ENCODE measurements at regions of chr6 and their contacts with region 1.

Region 1: DNA sequence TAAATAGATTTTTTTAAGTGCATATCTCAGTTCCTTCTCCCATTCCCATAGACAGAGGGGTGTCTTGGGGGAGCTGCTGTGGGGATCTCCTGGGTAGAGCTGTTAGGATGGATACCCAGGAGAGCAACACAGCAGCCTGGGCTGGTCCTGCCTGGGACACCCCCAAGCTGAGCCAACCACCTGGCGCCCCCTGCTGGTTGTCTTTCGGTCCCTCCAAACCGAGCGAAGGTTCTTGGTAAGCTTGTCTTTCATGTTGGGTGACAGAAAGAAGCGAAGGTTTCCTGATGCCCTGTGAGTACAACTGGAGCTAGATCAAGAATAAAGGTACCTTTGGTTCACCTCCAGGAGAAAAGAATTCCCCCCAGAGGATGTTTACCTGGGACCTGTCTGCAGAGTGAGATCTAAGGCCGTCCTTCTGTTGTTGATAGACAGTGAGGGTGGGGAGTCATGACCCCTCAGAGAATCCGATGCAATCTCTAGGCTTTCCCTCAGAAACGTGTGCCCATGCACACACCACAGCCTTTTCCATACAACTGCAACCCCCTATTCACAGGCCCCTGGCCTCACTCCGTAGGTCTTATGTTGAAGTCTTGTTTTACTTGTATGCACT is 50.8 kb downstream of the SNX9 start:
- DNase-seq: peak; percentile 77
- CTCF ChIP-seq: peak; percentile 83

Region 2: GRCh38 chr6:157143171-157143889 is 730.5 kb before region 1 on chr6:
- CTCF ChIA-PET with region 1: no interaction called
- POLR2A ChIA-PET with region 1: no interaction called
- DNase-seq: no peak
- CTCF ChIP-seq: no peak

Region 3: DNA sequence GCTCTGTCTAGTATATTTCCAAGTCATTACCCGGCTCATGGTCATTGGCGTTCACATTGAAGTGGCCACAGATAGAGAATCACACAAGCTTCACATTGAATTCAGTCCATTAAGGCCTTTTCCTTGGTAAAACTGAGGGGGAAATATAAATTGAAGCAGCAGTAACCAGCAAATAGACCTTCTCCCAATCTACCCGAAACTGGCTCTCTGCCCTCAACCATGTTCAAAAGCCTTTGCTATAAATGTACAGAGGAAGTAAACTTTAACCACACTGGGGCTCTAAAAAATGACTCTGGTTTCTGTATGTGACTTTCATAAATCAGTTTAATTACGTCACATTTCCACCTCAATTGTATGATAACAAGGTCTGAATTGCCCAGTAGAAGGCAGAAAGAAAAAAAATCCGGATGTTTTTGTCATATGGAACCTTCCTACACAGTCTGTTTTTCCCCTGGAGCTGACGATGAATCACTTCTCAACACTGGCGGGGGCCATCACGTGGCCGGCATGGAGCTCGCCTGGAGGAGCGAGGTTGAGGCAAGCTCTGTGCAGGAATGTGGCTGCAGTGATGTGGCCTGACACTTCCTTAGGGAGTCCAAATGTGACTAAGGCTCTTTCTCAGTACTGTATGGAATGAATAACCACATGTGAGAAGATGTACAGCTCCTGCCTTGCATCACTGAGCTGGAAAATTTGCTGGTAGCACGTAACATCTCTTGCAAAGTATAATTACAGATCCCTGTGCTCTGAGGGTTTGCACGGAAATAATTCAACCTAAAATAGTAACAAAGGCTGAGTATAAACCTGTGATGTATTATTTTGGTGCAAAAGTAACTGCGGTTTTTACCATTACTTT is 109.4 kb before region 1 on chr6:
- CTCF ChIA-PET with region 1: interaction called, 115 read pairs
- POLR2A ChIA-PET with region 1: no interaction called
- DNase-seq: peak; percentile 74
- CTCF ChIP-seq: no peak

Region 4: GRCh38 chr6:157806856-157807215 is 67.0 kb before region 1 on chr6:
- CTCF ChIA-PET with region 1: interaction called, 13 read pairs
- POLR2A ChIA-PET with region 1: no interaction called
- DNase-seq: no peak
- CTCF ChIP-seq: no peak

Region 5: GRCh38 chr6:157845493-157846259 is 28.2 kb before region 1 on chr6:
- CTCF ChIA-PET with region 1: interaction called, 12 read pairs
- POLR2A ChIA-PET with region 1: no interaction called
- DNase-seq: no peak
- CTCF ChIP-seq: no peak

Region 6: DNA sequence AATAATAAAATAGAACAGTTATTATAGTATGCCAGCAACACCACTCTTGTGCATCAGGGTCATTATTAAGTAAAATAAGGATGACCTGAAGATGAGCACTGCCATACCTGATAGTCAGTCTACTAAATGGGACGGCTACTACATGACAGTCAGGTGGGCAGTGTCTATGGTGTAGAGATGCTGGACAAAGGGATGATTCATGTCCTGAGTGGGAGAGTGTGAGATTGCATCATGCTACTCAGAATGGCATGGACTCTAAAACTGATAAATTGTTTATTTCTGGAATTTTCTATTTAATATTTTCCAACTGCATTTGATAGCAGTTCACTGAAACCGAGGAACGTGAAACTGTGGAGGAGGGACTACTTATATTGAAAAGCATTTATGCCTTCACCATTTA is 12.0 kb before region 1 on chr6:
- CTCF ChIA-PET with region 1: interaction called, 25 read pairs
- POLR2A ChIA-PET with region 1: no interaction called
- DNase-seq: no peak
- CTCF ChIP-seq: no peak

Region 7: DNA sequence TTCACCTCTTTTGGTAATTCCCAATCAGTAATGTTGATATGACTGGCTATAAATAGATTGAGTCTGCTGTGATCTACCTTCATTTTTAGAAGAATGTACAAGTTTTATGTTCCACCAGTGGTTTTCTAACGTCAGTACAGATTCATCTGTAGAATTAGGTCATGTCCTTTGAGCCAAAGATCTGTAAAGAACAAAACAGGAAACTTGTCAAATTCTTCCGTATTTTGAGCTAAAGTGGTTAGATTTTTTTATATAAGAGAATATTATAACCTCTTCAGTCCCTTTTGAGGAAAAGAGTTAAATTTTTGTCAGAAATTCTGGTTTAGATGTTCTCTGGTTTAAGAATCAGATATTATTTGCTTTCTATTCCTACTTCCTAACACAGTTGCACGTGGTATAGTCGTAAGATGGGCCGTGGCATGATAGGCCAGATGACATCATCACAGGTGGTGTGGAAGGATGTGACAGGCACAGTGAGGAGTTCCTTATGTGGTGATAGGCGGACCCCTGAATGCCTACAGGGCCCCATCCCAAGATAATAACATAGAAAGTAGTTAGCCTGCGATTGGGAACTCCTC is 11.5 kb after region 1 on chr6:
- CTCF ChIA-PET with region 1: interaction called, 37 read pairs
- POLR2A ChIA-PET with region 1: no interaction called
- DNase-seq: no peak
- CTCF ChIP-seq: no peak

Region 8: DNA sequence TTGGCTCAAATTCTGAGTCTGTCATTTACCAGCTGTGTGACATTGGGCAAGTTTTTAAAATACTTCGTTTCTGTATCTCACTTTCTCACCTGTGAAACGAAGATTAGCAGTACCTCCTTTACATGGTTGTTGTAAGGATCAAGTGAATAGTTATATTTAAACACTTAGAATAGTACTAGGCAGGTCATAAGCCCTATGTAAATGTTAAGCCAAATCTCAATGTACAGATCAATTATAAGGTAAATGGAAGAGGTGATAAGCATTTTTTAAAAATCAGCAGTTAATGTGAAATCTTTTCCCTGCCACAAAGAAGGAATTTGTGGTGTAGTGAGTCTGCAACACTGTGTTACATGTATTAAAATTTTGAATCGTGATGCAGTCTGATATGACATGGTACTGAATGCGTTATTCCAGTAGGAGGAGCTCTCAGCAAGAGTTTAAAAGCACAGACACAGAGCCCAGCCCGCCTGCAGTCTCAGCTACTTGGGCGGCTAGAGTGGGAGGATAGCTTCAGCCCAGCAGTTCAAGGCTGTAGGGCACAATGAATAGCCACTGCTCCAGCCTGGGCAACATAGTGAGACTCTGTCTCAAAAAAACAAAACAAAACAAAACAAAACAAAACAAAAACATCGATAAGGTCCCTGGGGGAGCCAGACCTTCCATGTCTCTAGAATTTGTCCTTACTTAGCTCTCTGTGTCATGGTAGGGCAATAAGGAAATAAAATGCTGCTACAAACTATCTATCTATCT is 340.3 kb after region 1 on chr6:
- CTCF ChIA-PET with region 1: no interaction called
- POLR2A ChIA-PET with region 1: no interaction called
- DNase-seq: peak; percentile 73
- CTCF ChIP-seq: peak; percentile 83